Panc1 (cell line): ENCODE measurements at regions of chr18 and their contacts with region 1.

Region 1: DNA sequence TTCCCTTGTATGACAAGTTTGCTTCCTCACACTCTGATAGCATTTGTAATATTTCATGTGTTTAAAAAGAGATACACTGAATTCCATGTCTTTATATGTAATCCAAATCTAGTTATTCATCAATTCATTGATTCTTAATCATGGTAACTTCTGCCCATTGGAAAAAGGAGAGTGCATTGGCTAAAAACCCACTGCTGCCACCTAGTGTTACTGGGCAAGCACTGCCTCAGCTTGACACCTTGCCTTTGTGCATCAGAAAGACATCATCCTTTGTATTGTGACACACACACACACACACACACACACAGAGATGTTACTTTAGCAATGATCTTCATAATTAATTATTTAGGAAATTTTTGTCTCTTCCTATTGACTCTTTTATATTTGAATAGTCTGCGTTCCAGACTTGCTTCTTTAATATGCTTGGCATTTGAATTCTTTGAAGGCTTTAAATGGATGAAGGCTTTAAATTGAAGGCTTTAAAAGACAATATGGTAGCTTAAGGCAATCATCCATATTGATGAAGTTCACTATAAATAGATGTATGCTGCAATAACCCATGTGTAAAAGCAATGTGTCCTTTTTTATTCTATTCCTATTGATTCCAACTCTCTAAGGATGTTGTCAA is 414.2 kb upstream of the CHST9 start:
- DNase-seq: no peak
- ATAC-seq: no peak
- H3K4me3 ChIP-seq: no peak overlapping the region
- H3K27ac ChIP-seq: no peak overlapping the region
- H3K4me1 ChIP-seq: no peaks in the 10 kb centered on the region
- H3K27me3 ChIP-seq: no peaks in the 10 kb centered on the region
- CTCF ChIP-seq: peak; percentile 87

Region 2: GRCh38 chr18:27017901-27018500 is 581.3 kb before region 1 on chr18:
- CTCF ChIA-PET with region 1: no interaction called
- POLR2A ChIA-PET with region 1: no interaction called
- in situ Hi-C with region 1: no loop called
- intact Hi-C with region 1: loop called (anchors 5 kb)
- DNase-seq: no peak
- ATAC-seq: peak; percentile 78; the same call in 1 of the 2 replicates
- H3K4me3 ChIP-seq: no peak overlapping the region
- H3K27ac ChIP-seq: no peak overlapping the region
- H3K4me1 ChIP-seq: no peaks in the 10 kb centered on the region
- H3K27me3 ChIP-seq: no peaks in the 10 kb centered on the region; the same call in 1 of the 2 replicates
- CTCF ChIP-seq: peak; percentile 71; the same call in 1 of the 2 replicates

Region 3: GRCh38 chr18:27363872-27364271 is 235.4 kb before region 1 on chr18:
- CTCF ChIA-PET with region 1: no interaction called
- POLR2A ChIA-PET with region 1: no interaction called
- in situ Hi-C with region 1: no loop called
- intact Hi-C with region 1: loop called (anchors 2 kb)
- DNase-seq: no peak
- ATAC-seq: no peak
- H3K4me3 ChIP-seq: no peak overlapping the region
- H3K27ac ChIP-seq: no peak overlapping the region
- H3K4me1 ChIP-seq: no peaks in the 10 kb centered on the region
- H3K27me3 ChIP-seq: no peaks in the 10 kb centered on the region
- CTCF ChIP-seq: peak; percentile 28; the same call in 1 of the 2 replicates